ENCODE measurements at regions of chr19 and their contacts with region 1.

Region 1: DNA sequence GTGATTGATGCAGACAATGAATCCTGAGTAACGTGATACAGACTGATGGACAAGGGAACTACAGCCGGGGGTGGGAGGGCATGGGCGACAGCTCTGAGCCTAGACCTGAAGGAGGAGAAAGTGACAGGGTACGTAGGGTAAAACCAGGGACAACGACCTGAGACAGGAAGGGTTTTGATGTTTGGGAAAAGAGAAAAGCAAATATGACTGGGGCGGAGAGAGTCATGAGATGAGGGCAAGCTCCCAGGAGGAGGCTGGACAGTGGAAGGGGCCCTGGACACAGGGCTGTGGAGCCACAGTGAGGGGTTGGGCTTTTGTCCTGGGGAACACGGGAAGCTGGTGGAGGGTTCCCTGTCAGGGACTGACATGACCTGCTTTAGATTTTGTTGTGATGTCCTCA is 34.2 kb downstream of the ZNF611 start:
- DNase-seq: no peak
- ATAC-seq: no peak
- H3K4me3 Mint-ChIP-seq: no peak overlapping the region
- H3K27ac Mint-ChIP-seq: no peak overlapping the region
- H3K4me1 Mint-ChIP-seq: no peaks in the 10 kb centered on the region
- H3K27me3 Mint-ChIP-seq: no peaks in the 10 kb centered on the region
- CTCF ChIP-seq: no peak

Region 2: DNA sequence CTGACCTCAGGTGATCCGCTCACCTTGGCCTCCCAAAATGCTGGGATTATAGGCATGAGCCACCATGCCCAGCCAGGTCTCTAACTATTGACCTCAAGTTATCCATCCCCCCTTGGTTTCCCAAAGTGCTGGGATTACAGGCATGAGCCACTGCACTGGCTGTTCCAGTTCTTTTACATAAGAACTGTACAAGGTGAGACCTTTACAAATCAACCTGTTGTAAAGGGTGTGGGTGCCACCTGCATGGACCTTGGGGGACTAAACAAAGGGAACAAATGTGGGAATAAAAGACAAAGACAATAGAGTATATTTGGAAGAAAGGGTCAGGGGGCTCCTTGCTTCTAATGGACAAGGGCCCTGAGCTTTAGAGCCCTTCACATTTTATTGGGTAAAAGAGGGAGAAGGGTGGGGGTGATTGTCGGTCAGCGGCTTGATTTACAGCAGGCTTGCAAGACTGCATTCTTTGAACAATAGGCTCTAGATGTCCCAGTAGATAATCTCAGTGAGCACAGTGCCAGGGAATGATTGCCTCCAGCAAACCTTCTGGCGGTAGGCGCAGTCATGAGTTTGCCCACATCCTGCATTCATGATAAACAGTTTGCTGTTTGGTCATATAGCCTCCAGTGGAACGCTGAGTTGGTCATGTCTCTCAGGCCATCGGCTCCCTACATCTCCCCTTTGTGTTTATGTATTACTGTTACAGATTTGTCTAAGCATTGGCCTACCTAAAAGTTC is 290.6 kb before region 1 on chr19:
- CTCF ChIA-PET with region 1: no interaction called
- POLR2A ChIA-PET with region 1: no interaction called
- intact Hi-C with region 1: no loop called
- DNase-seq: no peak
- ATAC-seq: no peak
- H3K4me3 Mint-ChIP-seq: no peak overlapping the region
- H3K27ac Mint-ChIP-seq: no peak overlapping the region
- H3K4me1 Mint-ChIP-seq: no peaks in the 10 kb centered on the region
- H3K27me3 Mint-ChIP-seq: no peaks in the 10 kb centered on the region
- CTCF ChIP-seq: no peak

Region 3: DNA sequence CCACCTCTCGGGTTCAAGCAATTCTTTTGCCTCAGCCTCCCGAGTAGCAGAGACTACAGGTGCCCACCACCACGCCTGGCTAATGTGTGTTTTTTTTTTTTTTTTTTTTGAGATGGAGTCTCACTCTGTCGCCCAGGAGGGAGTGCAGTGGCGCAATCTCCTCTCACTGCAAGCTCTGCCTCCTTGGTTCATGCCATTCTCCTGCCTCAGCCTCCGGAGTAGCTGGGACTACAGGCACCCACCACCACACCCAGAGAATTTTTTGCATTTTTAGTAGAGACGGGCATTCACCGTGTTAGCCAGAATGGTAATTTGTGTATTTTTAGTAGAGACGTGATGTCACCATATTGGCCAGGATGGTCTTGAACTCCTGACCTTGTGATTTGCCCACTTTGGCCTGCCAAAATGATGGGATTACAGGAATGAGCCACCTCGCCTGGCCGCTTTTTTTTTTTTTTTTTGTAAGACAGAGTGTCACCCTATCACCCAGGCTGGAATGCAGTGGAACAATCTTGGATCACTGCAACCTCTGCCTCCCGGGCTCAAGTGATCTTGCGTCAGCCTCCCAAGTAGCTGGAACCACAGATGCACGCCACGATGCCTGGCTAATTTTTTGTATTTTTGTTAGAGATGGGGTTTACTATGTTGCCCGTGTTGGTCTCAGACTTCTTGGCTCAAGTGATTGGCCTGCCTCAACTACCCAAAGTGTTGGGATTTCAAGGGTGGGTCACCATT is 202.3 kb before region 1 on chr19:
- CTCF ChIA-PET with region 1: no interaction called
- POLR2A ChIA-PET with region 1: interaction called, 12 read pairs
- intact Hi-C with region 1: no loop called
- DNase-seq: no peak
- ATAC-seq: no peak
- H3K4me3 Mint-ChIP-seq: no peak overlapping the region
- H3K27ac Mint-ChIP-seq: no peak overlapping the region
- H3K4me1 Mint-ChIP-seq: no peaks in the 10 kb centered on the region
- H3K27me3 Mint-ChIP-seq: peaks cover under 1% of the 10 kb centered on the region
- CTCF ChIP-seq: no peak

Region 4: GRCh38 chr19:53019684-53020083 is 319.0 kb after region 1 on chr19:
- CTCF ChIA-PET with region 1: no interaction called
- POLR2A ChIA-PET with region 1: no interaction called
- intact Hi-C with region 1: no loop called
- DNase-seq: no peak
- ATAC-seq: no peak
- H3K4me3 Mint-ChIP-seq: no peak overlapping the region
- H3K27ac Mint-ChIP-seq: no peak overlapping the region
- H3K4me1 Mint-ChIP-seq: no peaks in the 10 kb centered on the region
- H3K27me3 Mint-ChIP-seq: peaks cover 1% of the 10 kb centered on the region
- CTCF ChIP-seq: no peak

Measured in activated B cell treated with CpG ODN at 0.5 μM for 24 hours (primary cell).